Naive thymus-derived CD4-positive, alpha-beta T cell (primary cell): ENCODE measurements at regions of chr20 and their contacts with region 1.

Region 1: GRCh38 chr20:34558320-34559218 is at the start of gene MAP1LC3A:
- DNase-seq: peak; percentile 87 to 96 (median 89)
- ATAC-seq: peak; percentile 94
- H3K4me3 ChIP-seq: peak within 1 kb of the TSS; percentile 70
- H3K4me3 Mint-ChIP-seq: peak within 1 kb of the TSS; percentile 69 to 90 (median 85)
- H3K27ac ChIP-seq: peak within 1 kb of the TSS; percentile 97
- H3K27ac Mint-ChIP-seq: peak within 1 kb of the TSS; percentile 78 to 95 (median 88)
- H3K4me1 ChIP-seq: peaks cover 4 to 8% of the 10 kb centered on the region in 2 donors
- H3K4me1 Mint-ChIP-seq: peaks cover 8 to 14% (median 13%) of the 10 kb centered on the region in 7 donors
- H3K27me3 ChIP-seq: no peaks in the 10 kb centered on the region
- H3K27me3 Mint-ChIP-seq: no peaks in the 10 kb centered on the region
- total RNA-seq, gene MAP1LC3A: 0.60 to 10.3 (median 6.3) TPM

Region 2: DNA sequence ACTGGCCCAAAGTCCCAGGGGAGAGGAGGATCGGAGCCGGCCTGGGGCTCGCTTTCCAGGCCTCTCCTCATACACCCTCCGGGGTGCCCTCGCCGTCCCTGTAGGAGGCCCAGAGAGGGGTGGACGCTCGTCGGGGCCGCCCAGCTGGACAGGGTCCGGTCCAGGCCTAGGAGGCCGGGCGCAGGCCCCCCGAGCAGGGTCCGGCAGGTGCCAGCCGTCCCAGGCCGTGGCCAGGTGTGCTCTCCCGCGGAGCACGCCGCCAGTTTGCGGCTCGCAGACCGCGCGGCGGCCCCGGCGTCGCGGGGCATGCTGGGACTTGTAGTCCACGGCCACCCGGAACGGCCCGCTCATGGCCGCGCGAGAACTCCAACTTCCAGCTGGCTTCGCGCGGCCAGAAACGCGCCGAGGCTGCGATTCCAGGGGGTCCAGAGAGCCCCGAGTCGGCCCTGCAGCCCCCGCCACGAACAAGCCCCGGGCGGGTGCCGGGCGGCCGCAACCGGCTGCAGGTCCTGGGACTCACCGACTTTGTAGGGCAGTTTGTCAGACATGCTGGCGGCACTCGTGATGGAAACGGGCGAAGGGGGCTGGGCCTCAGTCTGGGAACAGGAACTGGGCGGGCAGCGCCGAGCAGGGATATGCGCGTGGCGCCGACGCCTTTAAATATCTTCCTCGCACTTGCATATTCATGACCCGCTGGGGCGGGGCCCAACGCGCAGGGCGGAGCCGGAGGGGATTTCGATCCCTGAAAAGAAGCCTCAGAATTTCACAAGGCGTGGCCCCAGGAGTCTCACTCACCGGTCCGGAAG is 255.6 kb before region 1 on chr20 and contains the start of gene AHCY:
- CTCF ChIA-PET with region 1: no interaction called
- POLR2A ChIA-PET with region 1: no interaction called
- intact Hi-C with region 1: loop called (anchors 1 kb)
- DNase-seq: peak; percentile 84 to 95 (median 92)
- ATAC-seq: peak; percentile 96
- H3K4me3 ChIP-seq: peak within 1 kb of the TSS; percentile 91
- H3K4me3 Mint-ChIP-seq: peak within 1 kb of the TSS; percentile 90 to 96 (median 91)
- H3K27ac ChIP-seq: peak within 1 kb of the TSS; percentile 87
- H3K27ac Mint-ChIP-seq: peak within 1 kb of the TSS; percentile 89 to 95 (median 93)
- H3K4me1 ChIP-seq: peaks cover 3 to 6% of the 10 kb centered on the region in 2 donors
- H3K4me1 Mint-ChIP-seq: peaks cover 0 to 27% (median 14%) of the 10 kb centered on the region in 7 donors
- H3K27me3 ChIP-seq: no peaks in the 10 kb centered on the region
- H3K27me3 Mint-ChIP-seq: peaks cover 0 to 2% (median 0%) of the 10 kb centered on the region in 5 donors
- total RNA-seq, gene AHCY: 19.1 to 62.9 (median 23.7) TPM

Region 3: DNA sequence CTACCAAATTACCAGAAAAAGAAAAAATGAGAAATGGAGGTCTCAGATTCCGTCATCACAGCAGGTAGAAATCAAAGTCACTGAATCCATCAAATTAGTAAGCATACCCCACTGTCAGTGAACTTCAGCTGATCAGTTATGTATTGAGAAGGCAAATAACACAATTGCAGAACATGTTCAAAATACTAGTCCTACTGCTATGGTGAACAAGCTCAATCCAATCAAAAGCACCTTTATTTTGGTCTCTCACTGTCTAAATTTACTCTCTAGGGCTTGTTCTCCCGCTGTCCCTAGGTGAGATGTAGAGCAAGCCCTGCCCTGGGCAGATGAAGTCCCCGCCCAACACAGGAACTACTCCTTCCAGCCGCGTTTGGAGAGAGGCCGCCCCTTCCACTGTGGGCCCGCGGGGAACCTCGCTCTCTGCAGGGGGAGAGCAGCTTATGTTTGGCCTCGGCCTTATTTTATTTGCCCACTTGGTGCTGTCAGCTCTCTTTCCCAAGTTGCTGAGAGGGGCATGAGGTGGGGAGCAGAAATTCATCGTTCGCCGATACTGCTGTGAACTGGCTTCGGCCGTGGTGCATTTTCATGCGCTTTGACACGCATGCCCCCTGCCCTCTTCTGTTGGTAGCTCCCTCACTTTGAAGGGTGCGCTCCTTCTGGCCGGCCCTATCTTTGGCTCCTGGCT is 14.3 kb before region 1 on chr20:
- CTCF ChIA-PET with region 1: no interaction called
- POLR2A ChIA-PET with region 1: interaction called, 3 read pairs
- intact Hi-C with region 1: loop called (anchors 2 kb)
- DNase-seq: peak in 2 of 9 donors; percentile 18 to 25
- ATAC-seq: peak; percentile 73
- H3K4me3 ChIP-seq: peak overlapping the region; percentile 34
- H3K4me3 Mint-ChIP-seq: peak overlapping the region; percentile 57 to 79 (median 73)
- H3K27ac ChIP-seq: no peak overlapping the region
- H3K27ac Mint-ChIP-seq: peak overlapping the region in 5 of 9 donors; percentile 8 to 66 (median 34)
- H3K4me1 ChIP-seq: peaks cover 0 to 19% of the 10 kb centered on the region in 2 donors
- H3K4me1 Mint-ChIP-seq: peaks cover 12 to 33% (median 24%) of the 10 kb centered on the region in 7 donors
- H3K27me3 ChIP-seq: no peaks in the 10 kb centered on the region
- H3K27me3 Mint-ChIP-seq: no peaks in the 10 kb centered on the region

Region 4: DNA sequence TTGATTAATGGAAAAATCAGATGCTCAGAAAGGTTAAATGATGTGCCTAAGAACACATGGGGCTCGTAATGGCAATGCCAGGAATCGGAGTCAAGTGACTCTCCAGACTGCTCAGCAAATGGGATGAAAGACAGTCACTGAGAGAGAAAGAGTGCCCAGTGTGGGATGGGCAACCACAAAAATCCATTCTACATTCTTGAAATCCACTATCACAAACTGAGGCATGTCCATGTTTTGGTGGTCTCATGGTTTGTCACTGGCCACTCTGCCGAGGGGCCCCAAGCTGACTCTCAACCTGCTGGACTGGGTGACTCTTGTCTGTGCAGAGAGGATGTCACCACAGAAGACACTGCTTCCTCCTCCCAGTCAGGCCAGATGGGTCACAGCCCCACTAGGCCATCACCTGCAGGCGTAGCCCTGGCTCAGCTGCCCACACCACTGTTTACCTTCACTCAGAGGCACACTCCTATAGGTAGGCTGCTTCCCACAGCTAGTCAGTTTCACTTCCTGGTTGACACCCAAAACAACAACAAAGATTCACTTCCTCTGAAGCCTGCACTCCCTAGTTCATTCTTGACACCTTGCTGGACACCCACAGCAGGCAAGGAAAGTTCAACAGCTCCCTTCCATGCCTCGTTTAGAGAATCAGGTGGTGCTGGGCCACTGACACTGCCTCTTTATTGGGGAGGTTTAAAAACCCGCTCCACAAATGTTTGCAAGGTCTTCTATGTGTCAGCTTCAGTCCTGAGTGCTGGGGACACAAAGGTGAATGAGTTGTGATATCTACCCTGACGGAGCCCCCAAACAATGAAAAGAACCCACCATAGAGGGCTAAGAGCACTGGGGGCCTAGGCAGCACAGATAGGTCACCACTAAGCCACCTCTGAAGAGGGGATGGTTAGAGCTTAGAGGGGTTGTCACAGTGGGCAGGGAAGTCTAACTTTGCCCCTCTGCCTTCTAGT is 21.7 kb after region 1 on chr20:
- CTCF ChIA-PET with region 1: no interaction called
- POLR2A ChIA-PET with region 1: no interaction called
- intact Hi-C with region 1: loop called in 1 of 2 experiments (anchors 2 kb)
- DNase-seq: peak in 2 of 9 donors; percentile 7 to 33
- ATAC-seq: peak; percentile 68
- H3K4me3 ChIP-seq: no peak overlapping the region
- H3K4me3 Mint-ChIP-seq: peak overlapping the region in 2 of 10 donors; percentile 16 to 64
- H3K27ac ChIP-seq: peak overlapping the region; percentile 31
- H3K27ac Mint-ChIP-seq: peak overlapping the region; percentile 2 to 92 (median 73)
- H3K4me1 ChIP-seq: peaks cover 10 to 11% of the 10 kb centered on the region in 2 donors
- H3K4me1 Mint-ChIP-seq: peaks cover 9 to 38% (median 17%) of the 10 kb centered on the region in 7 donors
- H3K27me3 ChIP-seq: no peaks in the 10 kb centered on the region
- H3K27me3 Mint-ChIP-seq: no peaks in the 10 kb centered on the region

Region 5: DNA sequence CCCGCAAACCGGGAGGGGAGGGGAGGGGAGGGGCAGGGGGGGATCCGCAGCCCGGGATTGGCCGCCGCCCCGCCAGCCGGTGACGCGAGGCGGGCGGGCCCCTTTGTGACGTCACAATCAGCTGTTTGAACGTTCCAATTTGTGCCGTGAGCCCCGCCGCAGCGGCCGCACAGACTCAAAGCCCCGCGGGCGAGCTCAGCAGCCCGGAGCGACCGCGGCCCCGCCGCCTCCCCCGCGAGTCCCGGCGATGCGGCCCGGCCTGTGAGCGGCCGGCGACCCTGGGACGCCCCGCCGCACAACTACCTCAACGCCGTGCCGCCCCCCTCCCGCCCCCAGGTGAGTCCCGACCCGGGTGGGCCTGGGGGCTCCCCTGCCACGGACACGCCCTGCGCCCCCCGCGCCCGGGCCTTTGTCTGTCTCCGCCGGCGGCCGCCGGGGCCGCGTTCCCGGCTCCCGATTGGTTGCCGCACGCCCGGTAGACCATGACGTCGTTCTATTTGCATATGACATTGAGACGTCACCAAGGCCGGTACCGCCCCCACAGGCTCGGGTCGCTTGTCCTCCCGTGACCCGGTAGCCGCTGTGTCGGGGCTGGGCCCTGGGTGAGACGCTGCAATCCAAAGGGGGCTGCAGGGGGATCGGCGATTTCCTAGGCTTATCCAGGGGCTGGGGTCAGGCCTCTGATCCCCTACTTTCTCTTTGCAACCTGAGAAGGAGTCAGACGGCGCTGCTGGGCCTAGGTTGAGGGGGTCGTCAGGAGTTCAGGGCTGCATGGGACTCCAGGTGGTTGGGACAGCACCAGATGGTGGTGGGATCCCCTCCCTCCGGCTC is 145.8 kb after region 1 on chr20 and contains the start of gene TP53INP2:
- CTCF ChIA-PET with region 1: interaction called, 6 read pairs
- POLR2A ChIA-PET with region 1: no interaction called
- intact Hi-C with region 1: loop called (anchors 1 kb)
- DNase-seq: peak; percentile 82 to 93 (median 87)
- ATAC-seq: peak; percentile 78
- H3K4me3 ChIP-seq: peak within 1 kb of the TSS; percentile 59
- H3K4me3 Mint-ChIP-seq: peak within 1 kb of the TSS; percentile 91 to 98 (median 94)
- H3K27ac ChIP-seq: peak within 1 kb of the TSS; percentile 94
- H3K27ac Mint-ChIP-seq: peak within 1 kb of the TSS; percentile 79 to 100 (median 97)
- H3K4me1 ChIP-seq: peaks cover 6 to 7% of the 10 kb centered on the region in 2 donors
- H3K4me1 Mint-ChIP-seq: peaks cover 15 to 39% (median 25%) of the 10 kb centered on the region in 7 donors
- H3K27me3 ChIP-seq: no peaks in the 10 kb centered on the region
- H3K27me3 Mint-ChIP-seq: peaks cover 0 to 25% (median 6%) of the 10 kb centered on the region in 5 donors
- total RNA-seq, gene TP53INP2: 1.2 to 41.4 (median 1.5) TPM